Breast epithelium (tissue), 4 donors: ENCODE measurements at regions of chr7 and their contacts with region 1.

Region 1: DNA sequence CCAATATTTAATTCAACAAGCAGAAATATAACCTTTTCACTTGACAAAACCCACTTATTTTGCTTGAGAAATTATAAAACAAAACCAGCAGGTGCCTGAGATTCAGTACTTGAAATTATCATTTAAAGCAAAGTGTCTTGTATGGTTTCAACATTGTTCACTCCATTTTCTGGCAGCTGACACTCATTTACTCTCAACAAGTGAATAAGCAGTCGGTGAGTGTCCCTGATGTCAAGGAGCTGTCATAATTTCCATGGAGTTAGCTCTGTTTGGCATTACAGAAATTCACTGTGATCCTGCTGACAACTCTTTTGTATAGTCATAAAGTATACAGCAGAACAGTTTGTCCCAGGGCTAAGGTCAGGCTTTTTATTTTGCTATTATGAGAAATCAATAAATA is 490.0 kb downstream of the CNTNAP2 start:
- DNase-seq: no peak
- H3K4me3 ChIP-seq: no peak overlapping the region
- H3K27ac ChIP-seq: no peak overlapping the region
- H3K4me1 ChIP-seq: no peaks in the 10 kb centered on the region
- H3K27me3 ChIP-seq: no peaks in the 10 kb centered on the region
- CTCF ChIP-seq: no peak
- POLR2A ChIP-seq: no peak

Region 2: GRCh38 chr7:146591976-146592375 is 14.7 kb before region 1 on chr7:
- intact Hi-C with region 1: loop called (anchors 2 kb)
- DNase-seq: no peak
- H3K4me3 ChIP-seq: no peak overlapping the region
- H3K27ac ChIP-seq: no peak overlapping the region
- H3K4me1 ChIP-seq: no peaks in the 10 kb centered on the region
- H3K27me3 ChIP-seq: no peaks in the 10 kb centered on the region
- CTCF ChIP-seq: no peak
- POLR2A ChIP-seq: no peak